GM12878 (cell line): ENCODE measurements at regions of chr16 and their contacts with region 1.

Region 1: GRCh38 chr16:27367461-27368357 is 34.3 kb upstream of the IL21R start:
- DNase-seq: peak; percentile 87
- ATAC-seq: peak; percentile 83
- H3K4me3 ChIP-seq: peak overlapping the region; percentile 46
- H3K27ac ChIP-seq: peak overlapping the region; percentile 95
- H3K4me1 ChIP-seq: peaks cover 34% of the 10 kb centered on the region
- H3K27me3 ChIP-seq: no peaks in the 10 kb centered on the region
- CTCF ChIP-seq: peak; percentile 84 to 91 (median 87)
- EP300 ChIP-seq: peak; percentile 72 to 86; a peak in 3 of 4 replicates
- POLR2A ChIP-seq: peak; percentile 54
- RAD21 ChIP-seq: peak; percentile 83

Region 2: DNA sequence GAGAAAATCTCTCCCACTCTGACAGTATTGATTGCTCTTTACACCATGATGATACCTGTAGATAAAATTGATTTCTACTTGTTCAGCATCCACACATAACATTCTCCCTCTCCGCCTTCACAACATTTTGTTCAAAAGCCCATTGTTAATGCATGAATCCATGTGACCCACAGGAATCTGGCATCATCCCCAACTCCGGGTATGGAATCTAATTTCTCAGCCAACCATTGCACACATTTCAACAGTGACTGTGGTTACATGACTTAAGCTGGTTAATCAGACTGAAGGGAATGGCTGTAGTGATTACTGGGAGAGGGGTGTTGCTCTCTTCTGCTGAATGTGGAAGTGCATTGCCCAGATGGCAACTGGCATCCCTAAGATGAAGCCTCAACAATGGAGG is 462.4 kb before region 1 on chr16:
- CTCF ChIA-PET with region 1: no interaction called
- POLR2A ChIA-PET with region 1: no interaction called
- RAD21 ChIA-PET with region 1: no interaction called
- SMC1A ChIA-PET with region 1: no interaction called
- in situ Hi-C with region 1: no loop called
- intact Hi-C with region 1: no loop called
- DNase-seq: no peak
- ATAC-seq: no peak
- H3K4me3 ChIP-seq: no peak overlapping the region
- H3K27ac ChIP-seq: no peak overlapping the region
- H3K4me1 ChIP-seq: no peaks in the 10 kb centered on the region
- H3K27me3 ChIP-seq: no peaks in the 10 kb centered on the region
- CTCF ChIP-seq: no peak
- EP300 ChIP-seq: no peak
- POLR2A ChIP-seq: no peak
- RAD21 ChIP-seq: no peak

Region 3: GRCh38 chr16:27179500-27180072 is 188.1 kb before region 1 on chr16:
- CTCF ChIA-PET with region 1: interaction called, 150 read pairs
- POLR2A ChIA-PET with region 1: interaction called, 12 read pairs
- RAD21 ChIA-PET with region 1: interaction called, 86 read pairs
- SMC1A ChIA-PET with region 1: interaction called, 76 read pairs
- in situ Hi-C with region 1: no loop called
- intact Hi-C with region 1: loop called (anchors 1 kb)
- DNase-seq: peak; percentile 55
- ATAC-seq: peak; percentile 98
- H3K4me3 ChIP-seq: no peak overlapping the region
- H3K27ac ChIP-seq: no peak overlapping the region
- H3K4me1 ChIP-seq: no peaks in the 10 kb centered on the region
- H3K27me3 ChIP-seq: no peaks in the 10 kb centered on the region; a peak in 1 of 4 replicates
- CTCF ChIP-seq: peak; percentile 98 to 99 (median 98); a peak in 5 of 6 replicates
- EP300 ChIP-seq: no peak
- POLR2A ChIP-seq: no peak
- RAD21 ChIP-seq: peak; percentile 91

Region 4: DNA sequence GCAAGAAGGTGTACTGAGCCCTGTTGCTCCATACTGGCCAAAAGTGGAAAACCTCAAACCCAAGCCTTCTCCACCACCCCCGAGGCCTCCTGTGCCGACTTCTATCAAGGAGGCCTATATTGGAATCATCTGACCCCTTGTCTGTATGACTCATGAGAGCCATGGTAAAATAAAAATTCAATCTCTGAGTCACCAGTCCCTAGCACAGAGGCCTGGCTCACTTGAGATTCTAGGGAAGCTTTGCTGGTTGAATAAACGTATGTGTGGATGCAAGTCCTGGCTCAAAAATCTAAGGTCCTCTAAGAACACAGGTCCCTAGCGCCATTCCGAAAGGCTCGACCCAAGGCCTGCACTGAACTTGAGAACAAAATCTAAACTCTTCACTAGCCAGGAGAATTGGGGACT is 114.2 kb before region 1 on chr16:
- CTCF ChIA-PET with region 1: interaction called, 12 read pairs
- POLR2A ChIA-PET with region 1: interaction called, 4 read pairs
- RAD21 ChIA-PET with region 1: interaction called, 9 read pairs
- SMC1A ChIA-PET with region 1: interaction called, 15 read pairs
- in situ Hi-C with region 1: no loop called
- intact Hi-C with region 1: no loop called
- DNase-seq: no peak
- ATAC-seq: peak; percentile 27
- H3K4me3 ChIP-seq: no peak overlapping the region
- H3K27ac ChIP-seq: peak overlapping the region; percentile 74
- H3K4me1 ChIP-seq: peaks cover 25% of the 10 kb centered on the region
- H3K27me3 ChIP-seq: no peaks in the 10 kb centered on the region
- CTCF ChIP-seq: no peak
- EP300 ChIP-seq: no peak
- POLR2A ChIP-seq: no peak
- RAD21 ChIP-seq: no peak

Region 5: DNA sequence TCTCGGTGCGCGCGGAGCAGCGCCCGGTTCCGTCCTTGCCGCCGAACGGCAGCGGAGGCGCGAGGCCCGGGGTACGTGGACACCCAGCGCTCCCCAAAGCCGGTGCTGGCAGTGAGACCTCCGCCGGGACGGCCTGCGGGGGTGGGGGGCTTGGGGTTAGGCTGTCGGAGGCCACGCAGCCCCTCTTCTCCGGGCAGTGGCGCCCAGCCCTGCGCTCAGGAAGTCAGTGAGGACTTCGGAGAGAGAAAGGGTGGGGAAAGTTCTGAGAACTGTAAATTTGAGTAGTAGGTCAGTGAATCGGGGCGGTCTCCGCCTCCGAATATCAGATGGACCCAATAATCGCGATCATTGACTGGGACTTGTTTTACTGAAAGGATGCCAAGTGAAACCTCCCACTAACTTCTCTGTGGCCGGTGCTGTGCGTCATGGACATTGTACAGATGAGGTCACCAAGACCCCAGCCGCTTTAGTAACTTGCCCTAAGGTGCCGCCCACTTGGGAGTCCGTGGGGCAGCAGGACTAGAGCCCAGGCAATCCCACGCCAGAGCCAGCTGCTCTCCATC is 53.5 kb before region 1 on chr16:
- CTCF ChIA-PET with region 1: interaction called, 47 read pairs
- POLR2A ChIA-PET with region 1: interaction called, 5 read pairs
- RAD21 ChIA-PET with region 1: interaction called, 33 read pairs
- SMC1A ChIA-PET with region 1: interaction called, 65 read pairs
- in situ Hi-C with region 1: no loop called
- intact Hi-C with region 1: loop called (anchors 5 kb)
- DNase-seq: no peak
- ATAC-seq: peak; percentile 56
- H3K4me3 ChIP-seq: peak overlapping the region; percentile 80
- H3K27ac ChIP-seq: peak overlapping the region; percentile 82
- H3K4me1 ChIP-seq: peaks cover 30% of the 10 kb centered on the region
- H3K27me3 ChIP-seq: 0 out of 4 replicates have a peak, but pooled peaks cover 0 to 2% of the 10 kb centered on the region in 2 experiments
- CTCF ChIP-seq: no peak
- EP300 ChIP-seq: no peak; a peak in 1 of 4 replicates
- POLR2A ChIP-seq: peak; percentile 38; the same call in 1 of the 2 replicates
- RAD21 ChIP-seq: no peak

Region 6: DNA sequence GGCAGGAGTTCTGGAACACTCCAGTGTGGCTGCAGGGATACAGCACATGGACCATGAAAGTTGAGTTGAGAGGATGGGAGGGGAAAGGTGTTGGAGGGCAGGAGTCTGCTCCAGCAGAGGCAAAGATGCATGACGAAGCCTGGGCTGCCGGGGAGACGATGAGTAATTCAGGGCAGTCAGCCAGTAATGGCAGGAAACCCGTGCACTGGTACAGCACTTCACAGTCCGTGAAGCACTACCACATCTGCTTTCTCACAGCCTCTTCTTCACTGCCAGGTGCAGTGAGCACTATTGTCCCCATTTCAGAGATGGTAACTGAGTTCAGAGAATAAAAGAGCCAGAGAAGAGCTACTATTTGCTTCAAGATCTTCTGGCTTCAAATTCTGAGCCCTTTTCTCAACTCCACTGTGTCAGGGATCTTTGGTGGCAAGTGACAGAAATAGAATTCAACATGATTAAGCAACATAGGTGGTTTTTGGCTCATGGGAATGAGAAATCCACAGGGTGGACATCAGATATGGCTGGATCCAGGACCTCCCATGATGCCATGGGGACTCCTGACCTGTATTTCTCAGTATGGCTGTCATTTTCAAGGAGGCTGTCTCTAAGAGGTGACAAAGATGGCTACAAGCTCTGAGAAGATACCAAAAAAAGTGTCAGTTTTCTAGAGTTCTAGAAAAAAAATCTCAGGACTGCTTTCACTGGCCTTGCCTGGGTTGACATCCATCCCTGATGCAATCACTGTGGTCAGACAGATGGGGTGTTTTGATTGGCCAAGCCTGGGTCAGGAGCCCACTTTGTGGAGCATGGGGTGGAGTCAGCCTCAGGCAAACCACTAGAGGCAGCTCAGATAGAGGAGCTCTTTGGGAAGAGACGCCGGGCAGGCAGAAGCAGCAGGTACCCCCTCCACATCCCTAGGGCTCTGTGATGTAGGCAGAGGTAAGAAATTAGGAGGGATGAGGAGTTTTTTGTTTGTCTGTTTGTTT is 59.0 kb after region 1 on chr16:
- CTCF ChIA-PET with region 1: interaction called, 22 read pairs
- POLR2A ChIA-PET with region 1: interaction called, 6 read pairs
- RAD21 ChIA-PET with region 1: interaction called, 34 read pairs
- SMC1A ChIA-PET with region 1: interaction called, 9 read pairs
- in situ Hi-C with region 1: no loop called
- intact Hi-C with region 1: no loop called
- DNase-seq: peak; percentile 93
- ATAC-seq: peak; percentile 89
- H3K4me3 ChIP-seq: peak overlapping the region; percentile 66
- H3K27ac ChIP-seq: peak overlapping the region; percentile 88
- H3K4me1 ChIP-seq: peaks cover 81% of the 10 kb centered on the region
- H3K27me3 ChIP-seq: no peaks in the 10 kb centered on the region
- CTCF ChIP-seq: peak in 2 of 3 experiments; percentile 22 to 42; a peak in 1 of 6 replicates
- EP300 ChIP-seq: peak in 1 of 2 experiments; percentile 80; a peak in 2 of 4 replicates
- POLR2A ChIP-seq: peak; percentile 89
- RAD21 ChIP-seq: no peak